ENCODE measurements at regions of chr9 and their contacts with region 1.

Region 1: GRCh38 chr9:114082017-114082762 is 4.1 kb upstream of the AMBP start:
- DNase-seq: peak; percentile 65
- H3K4me3 Mint-ChIP-seq: no peak overlapping the region
- H3K27ac Mint-ChIP-seq: no peak overlapping the region
- H3K4me1 Mint-ChIP-seq: no peaks in the 10 kb centered on the region
- H3K27me3 Mint-ChIP-seq: no peaks in the 10 kb centered on the region

Region 2: GRCh38 chr9:114291064-114291474 is 208.9 kb after region 1 on chr9:
- intact Hi-C with region 1: loop called (anchors 1 kb)
- DNase-seq: peak; percentile 52
- H3K4me3 Mint-ChIP-seq: no peak overlapping the region
- H3K27ac Mint-ChIP-seq: no peak overlapping the region
- H3K4me1 Mint-ChIP-seq: no peaks in the 10 kb centered on the region
- H3K27me3 Mint-ChIP-seq: peaks cover 4% of the 10 kb centered on the region

Region 3: DNA sequence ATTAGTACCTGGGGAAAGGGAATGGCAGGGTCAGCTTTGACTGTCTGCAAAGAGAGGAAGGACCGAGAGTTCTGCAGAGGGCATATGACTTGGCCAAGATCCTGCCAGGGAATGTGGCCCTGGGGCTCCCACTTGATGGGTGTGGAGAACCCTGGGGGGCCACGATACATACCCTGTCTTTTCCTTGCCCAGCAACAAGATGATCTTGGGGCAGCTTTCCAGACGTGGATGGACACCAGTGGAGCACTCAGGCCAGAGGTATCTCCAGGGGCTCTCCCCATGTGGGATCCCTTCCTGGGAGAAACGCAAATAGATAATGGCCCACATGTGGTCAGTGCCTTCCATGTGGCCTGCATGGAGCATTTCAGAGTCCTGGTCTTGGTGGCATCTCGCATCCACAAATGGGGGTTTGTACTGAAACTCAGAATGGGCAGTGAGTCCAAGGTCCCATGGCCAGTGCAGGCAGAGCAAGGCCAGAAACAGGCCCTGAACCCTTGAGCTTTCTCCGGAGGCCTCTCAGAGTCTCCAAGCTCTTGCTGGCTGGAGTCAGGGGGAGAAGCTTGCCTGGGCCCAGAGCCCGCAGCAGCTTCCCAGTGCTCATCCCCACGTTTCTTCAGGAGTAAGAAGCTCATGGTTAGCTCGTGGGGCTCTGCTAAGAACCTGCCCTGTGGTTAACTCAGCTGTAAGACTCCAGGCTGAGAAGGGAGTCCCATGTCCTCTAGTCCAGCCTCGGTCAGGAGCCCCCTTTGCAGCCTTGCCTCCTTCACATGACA is 222.4 kb after region 1 on chr9:
- intact Hi-C with region 1: loop called (anchors 1 kb)
- DNase-seq: no peak
- H3K4me3 Mint-ChIP-seq: no peak overlapping the region
- H3K27ac Mint-ChIP-seq: no peak overlapping the region
- H3K4me1 Mint-ChIP-seq: no peaks in the 10 kb centered on the region
- H3K27me3 Mint-ChIP-seq: no peaks in the 10 kb centered on the region

Measured in activated T-helper 1 cell treated with anti-CD3 and anti-CD28 coated beads, Interleukin-12 subunit alpha, Interleukin-12 subunit beta, Interleukin-2, Interleukin-4 antibody, amounts not matched to agents 30 ng/mL and 10 ng/mL and 1 ng/mL, durations not matched to agents 14 hours and 24 hours and 36 hours (primary cell).